MCF 10A (cell line): ENCODE measurements at regions of chr13 and their contacts with region 1.

Region 1: GRCh38 chr13:41668130-41668757 is 210.9 kb downstream of the RGCC start:
- DNase-seq: peak; percentile 90
- H3K4me3 Mint-ChIP-seq: no peak overlapping the region
- H3K27ac Mint-ChIP-seq: no peak overlapping the region
- H3K4me1 Mint-ChIP-seq: peaks cover 6% of the 10 kb centered on the region
- H3K27me3 Mint-ChIP-seq: no peaks in the 10 kb centered on the region
- CTCF ChIP-seq: peak; percentile 75

Region 2: GRCh38 chr13:40653527-40654318 is 1014.5 kb before region 1 on chr13:
- CTCF ChIA-PET with region 1: no interaction called
- POLR2A ChIA-PET with region 1: no interaction called
- intact Hi-C with region 1: no loop called
- DNase-seq: no peak
- H3K4me3 Mint-ChIP-seq: peak overlapping the region; percentile 21
- H3K27ac Mint-ChIP-seq: no peak overlapping the region
- H3K4me1 Mint-ChIP-seq: peaks cover 38% of the 10 kb centered on the region
- H3K27me3 Mint-ChIP-seq: no peaks in the 10 kb centered on the region
- CTCF ChIP-seq: no peak

Region 3: GRCh38 chr13:41652727-41653361 is 15.4 kb before region 1 on chr13:
- CTCF ChIA-PET with region 1: interaction called, 14 read pairs
- POLR2A ChIA-PET with region 1: interaction called, 4 read pairs
- intact Hi-C with region 1: no loop called
- DNase-seq: peak; percentile 54
- H3K4me3 Mint-ChIP-seq: no peak overlapping the region
- H3K27ac Mint-ChIP-seq: peak overlapping the region; percentile 59
- H3K4me1 Mint-ChIP-seq: peaks cover 10% of the 10 kb centered on the region
- H3K27me3 Mint-ChIP-seq: no peaks in the 10 kb centered on the region
- CTCF ChIP-seq: peak; percentile 69

Region 4: GRCh38 chr13:41763782-41764181 is 95.5 kb after region 1 on chr13:
- CTCF ChIA-PET with region 1: no interaction called
- POLR2A ChIA-PET with region 1: no interaction called
- intact Hi-C with region 1: no loop called
- DNase-seq: no peak
- H3K4me3 Mint-ChIP-seq: no peak overlapping the region
- H3K27ac Mint-ChIP-seq: no peak overlapping the region
- H3K4me1 Mint-ChIP-seq: no peaks in the 10 kb centered on the region
- H3K27me3 Mint-ChIP-seq: no peaks in the 10 kb centered on the region
- CTCF ChIP-seq: no peak

Region 5: GRCh38 chr13:41905600-41906254 is 237.5 kb after region 1 on chr13:
- CTCF ChIA-PET with region 1: interaction called, 7 read pairs
- POLR2A ChIA-PET with region 1: no interaction called
- intact Hi-C with region 1: loop called (anchors 1 kb)
- DNase-seq: peak; percentile 65
- H3K4me3 Mint-ChIP-seq: no peak overlapping the region
- H3K27ac Mint-ChIP-seq: peak overlapping the region; percentile 7
- H3K4me1 Mint-ChIP-seq: peaks cover 10% of the 10 kb centered on the region
- H3K27me3 Mint-ChIP-seq: no peaks in the 10 kb centered on the region
- CTCF ChIP-seq: peak; percentile 66

Region 6: GRCh38 chr13:41960639-41961465 is 292.6 kb after region 1 on chr13 and contains the start of gene VWA8:
- CTCF ChIA-PET with region 1: interaction called, 5 read pairs
- POLR2A ChIA-PET with region 1: interaction called, 12 read pairs
- intact Hi-C with region 1: loop called (anchors 2 kb)
- DNase-seq: peak; percentile 73
- H3K4me3 Mint-ChIP-seq: peak within 1 kb of the TSS; percentile 86
- H3K27ac Mint-ChIP-seq: peak within 1 kb of the TSS; percentile 90
- H3K4me1 Mint-ChIP-seq: peaks cover 23% of the 10 kb centered on the region
- H3K27me3 Mint-ChIP-seq: no peaks in the 10 kb centered on the region
- CTCF ChIP-seq: no peak
- total RNA-seq, gene VWA8: 20.1 and 21.4 TPM in 2 replicates

Region 7: GRCh38 chr13:42048682-42049453 is 380.6 kb after region 1 on chr13:
- CTCF ChIA-PET with region 1: interaction called, 10 read pairs
- POLR2A ChIA-PET with region 1: interaction called, 6 read pairs
- intact Hi-C with region 1: loop called (anchors 1 kb)
- DNase-seq: peak; percentile 76
- H3K4me3 Mint-ChIP-seq: peak overlapping the region; percentile 93
- H3K27ac Mint-ChIP-seq: peak overlapping the region; percentile 51
- H3K4me1 Mint-ChIP-seq: peaks cover 6% of the 10 kb centered on the region
- H3K27me3 Mint-ChIP-seq: no peaks in the 10 kb centered on the region
- CTCF ChIP-seq: peak; percentile 17

Region 8: DNA sequence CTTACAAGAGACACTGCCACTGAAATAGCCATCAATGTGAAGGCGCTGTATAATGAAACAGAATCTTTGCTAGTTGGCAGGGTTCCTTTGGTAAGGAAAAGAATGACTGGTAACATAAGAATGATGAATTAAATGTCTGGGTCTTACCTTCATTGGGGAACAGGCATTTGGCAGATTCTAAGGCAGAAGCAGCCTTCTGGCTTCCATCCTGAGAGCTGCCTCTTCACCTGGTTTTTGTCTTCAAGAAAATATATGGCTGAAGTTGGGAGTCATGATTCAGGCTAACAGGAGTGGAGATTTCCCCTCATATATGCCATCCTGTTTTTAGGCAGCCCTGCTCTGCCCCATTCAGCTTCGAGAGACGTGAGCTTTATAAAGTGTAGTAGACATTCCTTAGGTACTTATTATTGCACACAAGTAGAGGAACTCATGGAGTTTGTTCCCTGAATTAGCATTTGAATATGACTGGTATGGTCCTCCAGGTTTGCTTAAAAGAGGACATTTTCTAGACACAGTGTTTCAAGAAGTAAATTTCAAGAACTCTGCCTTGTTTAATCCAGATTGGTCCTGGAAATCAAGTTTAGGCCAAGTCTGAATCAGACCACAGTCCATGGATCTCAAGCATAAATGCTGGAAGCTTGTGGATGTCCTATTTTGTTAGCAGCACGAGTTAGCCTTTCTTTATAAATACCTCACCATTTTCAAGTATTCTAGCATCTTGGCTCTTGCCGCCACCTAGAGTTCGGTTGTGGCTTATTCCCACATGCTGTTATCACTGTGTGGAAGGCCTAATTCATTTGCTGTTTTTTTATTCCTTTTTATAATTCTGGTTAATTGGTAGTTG is 547.6 kb after region 1 on chr13:
- CTCF ChIA-PET with region 1: interaction called, 6 read pairs
- POLR2A ChIA-PET with region 1: no interaction called
- intact Hi-C with region 1: loop called (anchors 5 kb)
- DNase-seq: peak; percentile 49
- H3K4me3 Mint-ChIP-seq: no peak overlapping the region
- H3K27ac Mint-ChIP-seq: no peak overlapping the region
- H3K4me1 Mint-ChIP-seq: peaks cover 24% of the 10 kb centered on the region
- H3K27me3 Mint-ChIP-seq: no peaks in the 10 kb centered on the region
- CTCF ChIP-seq: peak; percentile 47